CD4-positive, alpha-beta memory T cell (primary cell): ENCODE measurements at regions of chr1 and their contacts with region 1.

Region 1: DNA sequence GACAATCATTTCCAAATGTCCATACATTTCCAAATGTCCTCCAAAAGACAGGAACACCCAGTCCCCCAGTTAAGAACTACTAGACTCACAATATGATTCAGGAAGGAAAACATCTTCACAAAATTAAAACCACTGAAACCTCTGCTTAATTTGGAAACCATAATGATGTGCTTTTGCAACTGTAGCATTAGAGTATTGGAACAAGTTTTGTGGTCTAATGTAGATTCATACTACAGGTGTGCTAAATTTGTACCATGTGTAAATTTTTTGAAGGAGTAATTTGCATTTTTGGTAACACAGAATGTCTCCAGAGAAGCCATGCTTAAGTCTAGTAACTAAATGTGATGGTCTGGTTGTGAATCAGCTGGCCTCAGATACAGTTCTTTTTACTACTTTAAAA is 129.6 kb downstream of the DPYD start:
- DNase-seq: no peak
- H3K4me3 ChIP-seq: no peak overlapping the region
- H3K4me3 Mint-ChIP-seq: peak overlapping the region in 5 of 8 donors; percentile 12 to 70 (median 52)
- H3K27ac ChIP-seq: no peak overlapping the region
- H3K27ac Mint-ChIP-seq: peak overlapping the region in 3 of 7 donors; percentile 25 to 67 (median 58)
- H3K4me1 ChIP-seq: peaks cover 35% of the 10 kb centered on the region
- H3K4me1 Mint-ChIP-seq: peaks cover 31 to 56% (median 38%) of the 10 kb centered on the region in 4 donors
- H3K27me3 ChIP-seq: no peaks in the 10 kb centered on the region
- H3K27me3 Mint-ChIP-seq: no peaks in the 10 kb centered on the region

Region 2: DNA sequence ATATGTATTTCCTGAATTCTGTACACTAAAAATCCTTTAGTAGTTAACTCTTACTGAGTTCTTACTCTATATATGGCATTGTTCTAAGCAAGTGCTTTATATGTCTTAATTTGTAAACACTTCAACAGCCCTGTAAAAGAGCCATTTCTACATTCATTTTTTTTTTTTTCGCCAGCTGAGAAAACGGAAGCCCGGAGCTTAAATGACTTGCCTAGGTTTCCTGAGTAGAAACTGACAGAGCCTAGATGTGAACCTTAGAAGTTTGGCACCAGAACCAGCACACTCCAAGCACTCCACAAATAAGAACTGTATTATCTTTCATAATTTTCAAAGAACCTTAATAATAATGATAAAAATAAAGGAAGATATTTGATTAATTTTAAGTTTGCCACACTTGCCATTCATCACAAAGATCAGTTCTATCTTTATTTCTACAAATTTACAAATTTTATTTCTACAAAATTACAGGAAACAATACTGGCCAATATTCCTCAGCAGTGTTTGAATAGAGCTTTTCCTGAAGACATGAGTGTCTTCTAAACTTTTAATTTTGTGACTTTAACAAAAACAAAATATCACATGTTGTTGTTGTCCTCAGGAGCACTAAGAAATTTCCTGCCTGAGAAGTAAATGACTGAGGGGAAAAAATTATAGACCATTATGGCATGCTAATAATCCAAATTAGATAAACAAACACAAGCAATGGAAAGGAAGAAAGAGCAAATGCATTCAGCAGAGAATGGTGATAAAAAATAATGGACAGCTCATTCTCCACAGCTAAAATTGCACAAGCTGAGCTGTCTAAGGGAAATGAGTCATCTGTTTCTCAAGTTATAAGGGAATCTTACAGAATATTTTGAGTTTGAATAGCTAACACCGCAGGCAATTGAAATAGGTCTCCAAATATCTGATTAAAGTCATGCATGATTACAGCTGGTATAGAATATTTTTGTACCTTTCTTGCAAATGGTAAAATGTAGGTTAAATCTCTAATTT is 58.4 kb after region 1 on chr1:
- CTCF ChIA-PET with region 1: no interaction called
- POLR2A ChIA-PET with region 1: no interaction called
- intact Hi-C with region 1: loop called (anchors 10 kb)
- DNase-seq: no peak
- H3K4me3 ChIP-seq: no peak overlapping the region
- H3K4me3 Mint-ChIP-seq: no peak overlapping the region
- H3K27ac ChIP-seq: no peak overlapping the region
- H3K27ac Mint-ChIP-seq: no peak overlapping the region
- H3K4me1 ChIP-seq: no peaks in the 10 kb centered on the region
- H3K4me1 Mint-ChIP-seq: peaks cover 10 to 38% (median 15%) of the 10 kb centered on the region in 4 donors
- H3K27me3 ChIP-seq: no peaks in the 10 kb centered on the region
- H3K27me3 Mint-ChIP-seq: no peaks in the 10 kb centered on the region